Upper lobe of right lung (tissue), 1 donor: ENCODE measurements at regions of chr11 and their contacts with region 1.

Region 1: DNA sequence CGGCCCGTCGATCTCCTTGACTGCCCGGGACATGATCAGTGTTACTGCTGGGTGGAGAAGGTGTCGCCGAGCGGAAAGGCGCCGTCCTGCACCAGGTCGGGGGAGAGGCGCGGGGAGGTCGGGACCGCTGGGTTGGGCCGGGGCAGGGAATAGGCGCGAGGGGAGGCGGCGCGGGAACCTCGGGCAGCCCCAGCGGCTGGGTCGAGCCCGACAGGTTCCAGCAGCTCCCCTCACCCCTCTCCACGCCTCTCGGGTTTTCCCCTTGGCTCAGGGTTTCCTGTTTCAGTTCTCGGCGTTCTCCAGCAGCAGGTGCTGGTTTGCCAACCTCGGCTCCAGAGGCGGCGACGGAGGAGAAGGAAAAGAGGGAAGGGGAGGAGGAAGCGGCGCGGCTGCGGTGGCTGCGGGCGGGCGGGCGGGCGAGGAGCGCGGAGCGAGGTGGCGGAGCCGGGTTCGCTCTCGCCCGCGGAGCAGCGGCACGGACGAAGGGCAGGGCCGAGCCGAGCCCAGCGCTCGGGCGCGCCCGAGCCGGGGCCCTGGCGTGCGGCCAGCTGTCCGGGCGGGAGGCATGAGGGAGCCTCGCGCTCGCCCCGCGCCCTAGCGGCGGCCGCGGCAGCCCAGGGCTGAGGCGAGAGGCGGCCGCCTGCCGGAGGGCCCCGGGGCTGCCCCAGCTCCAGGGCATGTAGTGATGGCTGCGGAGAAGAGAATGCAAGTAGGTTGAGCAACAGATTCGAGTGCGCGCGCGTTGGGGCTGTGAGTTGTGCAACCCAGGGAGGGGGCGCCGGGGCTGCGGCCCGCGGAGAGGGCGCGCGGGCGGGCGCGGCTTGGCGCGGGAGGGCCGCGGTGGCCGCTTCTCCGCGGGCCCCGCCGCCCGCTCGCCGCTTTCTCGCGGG is at the start of gene ZC3H12C:
- DNase-seq: peak; percentile 92
- ATAC-seq: peak; percentile 89
- H3K4me3 ChIP-seq: peak within 1 kb of the TSS; percentile 70
- H3K27ac ChIP-seq: peak within 1 kb of the TSS; percentile 93
- H3K4me1 ChIP-seq: no peaks in the 10 kb centered on the region
- H3K27me3 ChIP-seq: no peaks in the 10 kb centered on the region
- CTCF ChIP-seq: peak; percentile 17
- total RNA-seq, gene ZC3H12C: 14.8 TPM

Region 2: DNA sequence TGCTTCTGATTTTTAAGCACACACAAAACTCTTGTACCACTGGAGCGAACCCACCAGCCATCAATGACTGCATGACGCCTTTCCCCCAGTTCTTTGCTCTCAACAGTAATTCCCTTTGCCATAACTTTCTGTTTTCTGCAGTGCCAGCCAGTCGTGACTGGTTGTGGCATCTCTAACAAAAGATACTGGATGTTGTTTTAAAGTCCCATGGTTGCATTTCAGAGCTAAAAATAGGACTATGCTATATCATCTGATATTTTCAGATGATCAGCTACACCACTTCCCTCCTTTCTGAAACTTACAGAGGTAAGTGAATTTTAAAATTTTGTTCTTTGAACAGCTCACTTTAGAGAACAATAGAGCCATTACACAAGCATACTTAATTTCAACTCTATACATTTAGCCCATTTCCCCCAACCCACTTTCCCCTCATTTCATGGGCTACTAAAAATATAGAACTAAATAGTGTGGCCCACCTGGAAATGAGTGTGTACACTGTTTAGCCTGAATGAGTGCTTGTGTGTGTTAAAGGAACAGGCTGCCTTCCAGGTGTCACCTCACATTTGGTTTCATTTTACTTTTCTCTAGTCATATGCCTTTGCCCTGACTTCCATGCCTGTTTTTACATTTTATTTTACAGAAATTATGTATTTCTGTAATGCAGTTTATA is 136.5 kb before region 1 on chr11:
- intact Hi-C with region 1: loop called (anchors 10 kb)
- DNase-seq: no peak
- ATAC-seq: no peak
- H3K4me3 ChIP-seq: no peak overlapping the region
- H3K27ac ChIP-seq: no peak overlapping the region
- H3K4me1 ChIP-seq: no peaks in the 10 kb centered on the region
- H3K27me3 ChIP-seq: no peaks in the 10 kb centered on the region
- CTCF ChIP-seq: no peak

Region 3: GRCh38 chr11:110026858-110027626 is 65.7 kb before region 1 on chr11:
- intact Hi-C with region 1: no loop called
- DNase-seq: no peak
- ATAC-seq: peak; percentile 90
- H3K4me3 ChIP-seq: no peak overlapping the region
- H3K27ac ChIP-seq: no peak overlapping the region
- H3K4me1 ChIP-seq: no peaks in the 10 kb centered on the region
- H3K27me3 ChIP-seq: no peaks in the 10 kb centered on the region
- CTCF ChIP-seq: no peak